PC-9 (cell line): ENCODE measurements at regions of chr17 and their contacts with region 1.

Region 1: DNA sequence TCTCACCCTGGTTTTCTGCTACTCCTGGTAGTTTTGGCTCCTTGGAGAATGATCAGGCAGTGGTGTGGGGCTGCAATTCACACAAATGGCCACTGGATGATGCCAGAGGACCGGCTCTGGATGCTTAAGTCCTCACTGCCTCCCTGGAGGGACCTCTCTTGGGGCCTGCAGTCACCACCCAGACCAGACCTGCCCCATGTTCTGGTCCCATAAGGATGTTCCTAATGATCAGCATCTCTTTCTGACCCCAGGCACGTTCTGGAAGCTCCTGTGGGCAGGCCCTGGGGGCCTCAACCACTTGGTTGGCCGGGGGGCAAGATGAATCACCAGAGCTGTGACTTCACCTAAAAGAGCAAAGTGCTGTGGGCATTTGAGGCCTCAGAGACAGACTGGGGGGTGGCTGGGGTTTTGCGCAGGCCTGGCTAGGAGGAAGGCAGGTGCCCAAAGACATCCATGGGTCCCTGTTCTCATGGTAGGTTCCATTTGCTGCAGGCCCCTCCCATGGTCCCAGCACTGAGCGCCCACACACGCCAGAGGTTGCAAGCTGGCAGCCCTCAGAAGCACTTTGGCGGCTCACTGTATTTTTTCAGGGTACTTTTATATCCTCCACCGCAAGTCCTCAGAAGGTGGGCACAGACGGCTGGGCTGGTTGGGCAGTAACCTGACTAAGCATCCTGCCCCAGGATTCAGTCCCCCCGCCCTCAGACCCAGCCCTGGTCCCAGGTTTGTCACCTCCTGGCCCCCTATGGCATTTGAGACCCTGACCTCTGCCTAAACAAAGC is 53.2 kb downstream of the NT5M start:
- DNase-seq: peak; percentile 65 to 82
- H3K4me3 ChIP-seq: no peak overlapping the region
- H3K27ac ChIP-seq: no peak overlapping the region
- H3K4me1 ChIP-seq: no peaks in the 10 kb centered on the region
- H3K27me3 ChIP-seq: peaks cover 22% of the 10 kb centered on the region
- CTCF ChIP-seq: peak; percentile 100

Region 2: GRCh38 chr17:17001874-17002520 is 354.3 kb before region 1 on chr17:
- CTCF ChIA-PET with region 1: no interaction called
- POLR2A ChIA-PET with region 1: no interaction called
- intact Hi-C with region 1: loop called (anchors 2 kb)
- DNase-seq: peak; percentile 58 to 88
- H3K4me3 ChIP-seq: no peak overlapping the region
- H3K27ac ChIP-seq: no peak overlapping the region
- H3K4me1 ChIP-seq: peaks cover 4% of the 10 kb centered on the region; the same call in 1 of the 2 replicates
- H3K27me3 ChIP-seq: no peaks in the 10 kb centered on the region
- CTCF ChIP-seq: peak; percentile 98

Region 3: GRCh38 chr17:17303010-17303846 is 53.1 kb before region 1 on chr17 and contains the start of gene NT5M:
- CTCF ChIA-PET with region 1: no interaction called
- POLR2A ChIA-PET with region 1: no interaction called
- intact Hi-C with region 1: loop called (anchors 5 kb)
- DNase-seq: peak; percentile 53 to 67
- H3K4me3 ChIP-seq: peak within 1 kb of the TSS; percentile 79
- H3K27ac ChIP-seq: no peak within 1 kb of the TSS
- H3K4me1 ChIP-seq: peaks cover 6% of the 10 kb centered on the region; the same call in 1 of the 2 replicates
- H3K27me3 ChIP-seq: no peaks in the 10 kb centered on the region
- CTCF ChIP-seq: no peak
- total RNA-seq, gene NT5M: 6.2 and 9.6 TPM in 2 replicates

Region 4: GRCh38 chr17:17551361-17551760 is 195.0 kb after region 1 on chr17:
- CTCF ChIA-PET with region 1: no interaction called
- POLR2A ChIA-PET with region 1: no interaction called
- intact Hi-C with region 1: no loop called
- DNase-seq: no peak
- H3K4me3 ChIP-seq: no peak overlapping the region
- H3K27ac ChIP-seq: no peak overlapping the region
- H3K4me1 ChIP-seq: no peaks in the 10 kb centered on the region
- H3K27me3 ChIP-seq: no peaks in the 10 kb centered on the region
- CTCF ChIP-seq: no peak

Region 5: DNA sequence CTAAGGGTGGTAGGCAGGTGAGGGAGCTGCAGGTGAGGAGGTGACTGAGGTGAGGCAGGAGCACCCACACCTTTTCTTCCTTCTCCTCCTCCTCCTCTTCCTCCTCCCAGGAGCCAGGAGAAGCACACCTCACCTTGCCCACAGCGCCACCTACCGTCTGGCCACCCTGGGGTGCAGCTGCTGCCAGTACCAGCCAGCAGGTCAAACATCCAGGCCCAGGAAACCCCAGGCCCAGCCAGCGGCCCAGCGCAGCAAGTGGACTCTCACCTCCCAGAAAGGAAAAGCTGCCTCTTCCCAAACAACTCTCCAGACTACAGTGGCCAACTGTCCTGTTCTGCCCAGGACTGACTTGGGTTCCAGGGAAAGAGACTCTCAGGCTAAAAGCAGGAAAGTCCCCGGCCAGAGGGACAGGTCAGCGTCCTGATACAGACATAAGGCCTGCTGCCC is 212.4 kb after region 1 on chr17:
- CTCF ChIA-PET with region 1: interaction called, 3 read pairs
- POLR2A ChIA-PET with region 1: no interaction called
- intact Hi-C with region 1: loop called (anchors 1 kb)
- DNase-seq: peak; percentile 49 to 81
- H3K4me3 ChIP-seq: no peak overlapping the region
- H3K27ac ChIP-seq: no peak overlapping the region
- H3K4me1 ChIP-seq: no peaks in the 10 kb centered on the region
- H3K27me3 ChIP-seq: no peaks in the 10 kb centered on the region
- CTCF ChIP-seq: peak; percentile 93

Region 6: GRCh38 chr17:17641621-17642409 is 285.5 kb after region 1 on chr17:
- CTCF ChIA-PET with region 1: interaction called, 6 read pairs
- POLR2A ChIA-PET with region 1: no interaction called
- intact Hi-C with region 1: loop called (anchors 1 kb)
- DNase-seq: peak; percentile 63 to 78
- H3K4me3 ChIP-seq: no peak overlapping the region
- H3K27ac ChIP-seq: no peak overlapping the region
- H3K4me1 ChIP-seq: no peaks in the 10 kb centered on the region; the same call in 1 of the 2 replicates
- H3K27me3 ChIP-seq: 0 out of 2 replicates have a peak, but pooled peaks cover 2% of the 10 kb centered on the region
- CTCF ChIP-seq: peak; percentile 96